ENCODE measurements at regions of chr19 and their contacts with region 1.

Region 1: GRCh38 chr19:4732680-4733114 is 9.1 kb upstream of the DPP9 start:
- DNase-seq: peak; percentile 43
- H3K4me3 ChIP-seq: no peak overlapping the region
- H3K27ac ChIP-seq: no peak overlapping the region
- H3K4me1 ChIP-seq: no peaks in the 10 kb centered on the region
- H3K27me3 ChIP-seq: peaks cover 2% of the 10 kb centered on the region
- CTCF ChIP-seq: peak; percentile 56 to 86

Region 2: DNA sequence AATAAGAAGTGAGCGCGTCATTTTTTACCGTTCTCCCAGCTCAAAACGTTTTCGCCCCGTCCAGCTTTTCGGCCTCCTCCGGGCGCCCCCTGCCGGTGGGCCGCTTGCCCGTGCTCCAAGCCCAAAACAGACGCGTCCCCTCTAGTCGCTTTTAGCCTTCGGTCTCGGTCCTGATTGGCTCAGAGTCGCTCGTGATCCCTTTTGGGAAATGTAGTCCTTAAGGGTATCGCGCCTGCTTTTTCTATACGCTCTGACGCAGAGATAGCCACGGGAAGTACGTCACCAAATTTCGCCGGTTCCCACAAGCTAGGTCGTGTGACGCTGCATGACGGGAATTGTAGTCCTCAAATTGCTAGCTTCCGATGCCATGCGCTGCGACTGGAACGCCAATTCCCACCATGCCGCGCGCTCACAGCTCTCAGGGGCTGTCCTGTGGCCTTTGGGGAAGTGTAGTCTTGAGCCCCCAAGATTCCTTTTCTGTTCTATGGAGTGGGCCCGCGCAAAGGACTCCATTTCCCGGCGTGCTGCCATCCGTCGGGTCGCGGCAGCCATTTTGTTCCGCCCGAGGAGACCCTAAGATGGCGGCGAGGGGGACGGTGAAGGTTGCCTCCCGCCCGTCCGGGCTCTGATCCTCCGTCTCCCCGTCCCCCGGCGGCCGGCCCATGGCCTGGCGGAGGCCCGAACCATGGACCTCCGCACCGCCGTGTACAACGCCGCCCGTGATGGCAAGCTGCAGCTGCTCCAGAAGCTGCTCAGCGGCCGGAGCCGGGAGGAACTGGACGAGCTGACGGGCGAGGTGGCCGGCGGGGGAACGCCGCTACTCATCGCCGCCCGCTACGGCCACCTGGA is 58.7 kb after region 1 on chr19 and contains the start of gene FEM1A:
- CTCF ChIA-PET with region 1: interaction called, 3 read pairs
- dilution Hi-C with region 1: no loop called
- in situ Hi-C with region 1: loop called (anchors 5 kb)
- intact Hi-C with region 1: loop called (anchors 1 kb)
- DNase-seq: peak; percentile 100
- H3K4me3 ChIP-seq: peak within 1 kb of the TSS; percentile 68 to 89 (median 77)
- H3K27ac ChIP-seq: peak within 1 kb of the TSS; percentile 78
- H3K4me1 ChIP-seq: peaks cover 39% of the 10 kb centered on the region
- H3K27me3 ChIP-seq: no peaks in the 10 kb centered on the region
- CTCF ChIP-seq: peak; percentile 98 to 99
- total RNA-seq, gene FEM1A: 12.8 to 17.5 TPM